ENCODE measurements at regions of chr1 and their contacts with region 1.

Region 1: DNA sequence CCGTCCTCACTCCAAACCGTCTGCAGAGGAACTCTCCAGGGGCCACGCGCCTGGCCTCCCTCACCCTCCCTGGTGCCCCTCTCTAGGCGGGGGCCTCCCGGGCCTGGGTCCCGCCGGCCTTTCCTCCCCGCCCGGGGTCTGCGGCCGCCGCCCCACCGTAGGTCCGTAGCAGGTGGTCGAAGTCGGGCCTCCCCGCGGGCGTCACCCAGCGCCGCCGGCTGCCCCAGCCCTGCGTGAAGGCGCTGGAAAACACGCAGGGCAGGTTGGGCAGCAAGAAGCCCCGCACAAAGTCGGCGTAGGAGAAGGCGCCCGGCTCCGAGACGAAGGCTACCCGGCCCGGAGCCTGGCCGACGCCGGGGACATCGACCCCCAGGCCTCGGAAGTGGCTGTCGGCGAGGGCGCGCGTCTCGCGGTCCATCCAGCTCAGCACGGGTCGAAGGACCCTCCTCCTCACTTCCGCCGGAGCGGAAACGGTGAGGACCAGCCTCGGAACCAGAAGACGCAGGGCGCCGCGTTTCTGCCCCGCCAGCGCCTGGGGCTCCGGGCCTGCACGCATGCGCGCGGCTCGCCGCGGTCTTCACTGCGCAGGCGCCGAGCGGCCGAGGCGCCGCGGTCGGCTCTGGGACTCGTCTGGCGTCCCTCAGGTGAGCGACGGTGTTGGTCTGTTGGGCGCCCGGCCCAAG is at the starts of genes JMJD4 and SNAP47:
- DNase-seq: peak; percentile 84 to 98 (median 94)
- ATAC-seq: peak; percentile 90 to 94
- H3K4me3 Mint-ChIP-seq: peak within 1 kb of the TSS; percentile 84 to 96 (median 90)
- H3K27ac Mint-ChIP-seq: peak within 1 kb of the TSS; percentile 84 to 96 (median 92)
- H3K4me1 Mint-ChIP-seq: peaks cover 36 to 61% (median 48%) of the 10 kb centered on the region in 4 donors
- H3K27me3 Mint-ChIP-seq: no peaks in the 10 kb centered on the region
- polyA plus RNA-seq, gene JMJD4: 27.1 to 33.0 (median 31.9) TPM
- polyA plus RNA-seq, gene SNAP47: 40.0 to 46.6 (median 40.8) TPM

Region 2: GRCh38 chr1:228044961-228045360 is 310.0 kb after region 1 on chr1:
- POLR2A ChIA-PET with region 1: interaction called, 11 read pairs
- DNase-seq: peak in 1 of 10 donors; percentile 57
- ATAC-seq: no peak
- H3K4me3 Mint-ChIP-seq: no peak overlapping the region
- H3K27ac Mint-ChIP-seq: no peak overlapping the region
- H3K4me1 Mint-ChIP-seq: no peaks in the 10 kb centered on the region
- H3K27me3 Mint-ChIP-seq: peaks cover 2 to 24% (median 12%) of the 10 kb centered on the region in 5 donors

Measured in naive thymus-derived CD8-positive, alpha-beta T cell (primary cell).